H1 (cell line): ENCODE measurements at regions of chr19 and their contacts with region 1.

Region 1: DNA sequence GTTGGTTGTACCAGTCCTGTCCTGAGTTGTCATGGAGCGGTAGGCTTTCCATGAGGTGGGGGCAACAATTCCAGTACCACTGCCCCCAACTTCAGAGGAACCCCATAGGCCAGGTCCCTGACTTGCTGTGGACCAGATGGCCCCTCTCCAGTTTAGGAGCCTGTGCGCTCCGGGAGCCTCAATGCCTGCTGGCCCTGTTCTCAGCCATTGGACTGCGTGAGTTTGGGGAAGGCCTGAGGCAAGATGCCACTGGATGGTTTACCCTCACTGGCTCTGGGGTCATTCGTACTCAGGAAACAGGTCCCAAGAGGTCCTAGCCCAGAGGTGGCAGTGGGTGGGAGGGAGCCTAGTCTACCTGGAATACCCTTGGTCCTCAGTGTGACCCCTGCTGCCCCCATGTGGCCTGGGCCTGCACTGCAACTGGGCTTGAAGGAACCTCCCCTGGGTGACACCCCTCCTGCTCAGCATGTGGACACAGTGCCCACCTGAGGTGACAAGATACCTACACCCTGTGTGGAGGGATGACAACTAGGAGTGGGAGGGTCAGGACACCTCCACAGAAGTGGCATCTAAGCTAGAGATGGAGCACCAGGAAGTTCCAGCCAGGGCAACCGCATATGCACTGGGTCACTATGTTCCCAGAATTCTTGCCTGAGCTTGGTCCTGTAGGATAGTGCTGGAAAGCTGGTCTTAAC is 6.0 kb upstream of the PRR19 start:
- DNase-seq: peak; percentile 65 to 100
- H3K4me3 ChIP-seq: no peak overlapping the region
- H3K27ac ChIP-seq: no peak overlapping the region
- H3K4me1 ChIP-seq: peaks cover 0 to 2% (median under 1%) of the 10 kb centered on the region in 4 experiments; a peak in 1 of 7 replicates
- H3K27me3 ChIP-seq: no peaks in the 10 kb centered on the region
- CTCF ChIP-seq: peak; percentile 87 to 100 (median 98)
- EP300 ChIP-seq: no peak
- POLR2A ChIP-seq: peak in 1 of 2 experiments; percentile 18; a peak in 1 of 3 replicates
- RAD21 ChIP-seq: peak; percentile 67 to 76

Region 2: GRCh38 chr19:42283143-42284065 is 12.6 kb before region 1 on chr19:
- CTCF ChIA-PET with region 1: interaction called, 42 read pairs
- POLR2A ChIA-PET with region 1: interaction called, 20 read pairs
- DNase-seq: peak in 1 of 2 experiments; percentile 91
- H3K4me3 ChIP-seq: peak overlapping the region; percentile 42 to 57 (median 52)
- H3K27ac ChIP-seq: no peak overlapping the region
- H3K4me1 ChIP-seq: peaks cover 9 to 42% (median 29%) of the 10 kb centered on the region in 4 experiments
- H3K27me3 ChIP-seq: no peaks in the 10 kb centered on the region
- CTCF ChIP-seq: no peak
- EP300 ChIP-seq: no peak
- POLR2A ChIP-seq: no peak
- RAD21 ChIP-seq: no peak

Region 3: GRCh38 chr19:42306646-42307045 is 10.7 kb after region 1 on chr19:
- CTCF ChIA-PET with region 1: interaction called, 21 read pairs
- POLR2A ChIA-PET with region 1: interaction called, 7 read pairs
- DNase-seq: peak in 1 of 2 experiments; percentile 59
- H3K4me3 ChIP-seq: no peak overlapping the region
- H3K27ac ChIP-seq: no peak overlapping the region
- H3K4me1 ChIP-seq: peaks cover 0 to 12% (median 7%) of the 10 kb centered on the region in 4 experiments; a peak in 3 of 7 replicates
- H3K27me3 ChIP-seq: no peaks in the 10 kb centered on the region
- CTCF ChIP-seq: no peak
- EP300 ChIP-seq: no peak
- POLR2A ChIP-seq: no peak
- RAD21 ChIP-seq: no peak

Region 4: GRCh38 chr19:42311657-42312056 is 15.7 kb after region 1 on chr19:
- CTCF ChIA-PET with region 1: interaction called, 21 read pairs
- POLR2A ChIA-PET with region 1: interaction called, 6 read pairs
- DNase-seq: peak in 1 of 2 experiments; percentile 49
- H3K4me3 ChIP-seq: no peak overlapping the region
- H3K27ac ChIP-seq: no peak overlapping the region
- H3K4me1 ChIP-seq: peaks cover 0 to 8% (median 2%) of the 10 kb centered on the region in 4 experiments; a peak in 2 of 7 replicates
- H3K27me3 ChIP-seq: peaks cover 0 to 20% (median 11%) of the 10 kb centered on the region in 4 experiments; a peak in 5 of 7 replicates
- CTCF ChIP-seq: peak; percentile 36 to 56 (median 55); a peak in 3 of 4 replicates
- EP300 ChIP-seq: no peak
- POLR2A ChIP-seq: no peak
- RAD21 ChIP-seq: peak; percentile 28 to 36; a peak in 3 of 4 replicates